ENCODE measurements at regions of chr19 and their contacts with region 1.

Region 1: DNA sequence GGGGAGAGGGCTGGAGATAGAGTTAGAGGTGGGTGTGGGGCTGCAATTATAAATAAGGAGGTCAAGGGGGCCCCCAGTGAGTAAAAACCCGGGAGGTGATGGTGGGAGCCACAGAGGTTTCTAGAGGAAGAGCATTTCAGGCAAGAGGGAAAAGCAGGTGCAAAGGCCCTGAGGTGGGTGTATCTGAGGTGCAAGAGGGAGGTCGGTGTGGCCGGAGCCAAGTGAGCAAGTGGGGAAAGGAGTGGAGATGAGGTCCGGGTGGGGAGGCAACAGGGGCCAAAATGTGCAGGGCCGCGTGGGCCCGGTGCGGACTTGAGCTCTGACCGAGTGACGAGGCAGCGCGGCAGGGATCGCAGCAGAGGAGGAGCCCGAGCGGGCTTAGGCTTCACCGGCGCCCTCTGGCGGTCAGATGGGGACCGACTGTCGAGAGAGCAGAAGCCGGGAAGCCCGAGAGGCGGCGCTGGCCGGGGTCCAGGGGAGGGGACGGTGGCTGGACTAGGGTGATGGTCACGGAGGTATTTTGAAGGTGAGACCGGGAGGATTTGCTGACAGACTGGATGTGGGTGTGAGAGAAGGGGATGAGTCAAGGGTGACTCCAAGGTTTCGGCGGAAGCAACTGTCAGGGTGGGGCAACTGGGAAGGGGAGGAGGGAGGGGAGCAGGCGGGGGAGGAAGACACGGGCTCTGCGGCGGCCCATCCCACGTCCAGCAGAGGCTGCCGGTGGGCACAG is 17.7 kb upstream of the SPACA4 start:
- DNase-seq: peak; percentile 91
- H3K4me3 ChIP-seq: peak overlapping the region in 1 of 2 donors; percentile 19
- H3K27ac ChIP-seq: no peak overlapping the region
- H3K4me1 ChIP-seq: peaks cover 3% of the 10 kb centered on the region
- H3K27me3 ChIP-seq: no peaks in the 10 kb centered on the region
- CTCF ChIP-seq: peak; percentile 86 to 97 (median 90)
- POLR2A ChIP-seq: peak; percentile 28

Region 2: GRCh38 chr19:48489608-48490216 is 99.1 kb before region 1 on chr19:
- intact Hi-C with region 1: loop called (anchors 2 kb)
- DNase-seq: peak; percentile 61
- H3K4me3 ChIP-seq: no peak overlapping the region
- H3K27ac ChIP-seq: no peak overlapping the region
- H3K4me1 ChIP-seq: peaks cover 5% of the 10 kb centered on the region
- H3K27me3 ChIP-seq: no peaks in the 10 kb centered on the region
- CTCF ChIP-seq: peak; percentile 77 to 96 (median 88)
- POLR2A ChIP-seq: no peak

Region 3: GRCh38 chr19:48506138-48506733 is 82.6 kb before region 1 on chr19:
- intact Hi-C with region 1: loop called (anchors 5 kb)
- DNase-seq: no peak
- H3K4me3 ChIP-seq: no peak overlapping the region
- H3K27ac ChIP-seq: no peak overlapping the region
- H3K4me1 ChIP-seq: peaks cover 3% of the 10 kb centered on the region
- H3K27me3 ChIP-seq: no peaks in the 10 kb centered on the region
- CTCF ChIP-seq: peak; percentile 56 to 75 (median 63)
- POLR2A ChIP-seq: no peak

Measured in prostate gland (tissue), 2 donors.